Activated CD8-positive, alpha-beta memory T cell treated with anti-CD3 and anti-CD28 coated beads, Interleukin-2, amount 10 ng/mL, durations not matched to agents 7 days and 5 days (primary cell): ENCODE measurements at regions of chr10 and their contacts with region 1.

Region 1: GRCh38 chr10:127906548-127907377 is at the start of gene PTPRE:
- DNase-seq: peak; percentile 58
- ATAC-seq: peak; percentile 97
- H3K4me3 Mint-ChIP-seq: no peak within 1 kb of the TSS
- H3K27ac Mint-ChIP-seq: no peak within 1 kb of the TSS
- H3K4me1 Mint-ChIP-seq: no peaks in the 10 kb centered on the region
- H3K27me3 Mint-ChIP-seq: peaks cover 53% of the 10 kb centered on the region
- total RNA-seq, gene PTPRE: 16.5 to 27.1 TPM

Region 2: GRCh38 chr10:127990846-127991542 is 84.2 kb after region 1 on chr10:
- CTCF ChIA-PET with region 1: interaction called, 13 read pairs
- DNase-seq: peak; percentile 61
- ATAC-seq: peak; percentile 61
- H3K4me3 Mint-ChIP-seq: peak overlapping the region; percentile 23
- H3K27ac Mint-ChIP-seq: peak overlapping the region; percentile 29
- H3K4me1 Mint-ChIP-seq: peaks cover 38% of the 10 kb centered on the region
- H3K27me3 Mint-ChIP-seq: peaks cover 8% of the 10 kb centered on the region